Aorta (tissue), 5 donors: ENCODE measurements at regions of chr10 and their contacts with region 1.

Region 1: GRCh38 chr10:100346765-100347567 is at the start of gene SCD:
- DNase-seq: peak; percentile 91
- ATAC-seq: peak; percentile 86
- H3K4me3 ChIP-seq: peak within 1 kb of the TSS; percentile 50 to 61
- H3K27ac ChIP-seq: no peak within 1 kb of the TSS
- H3K4me1 ChIP-seq: no peaks in the 10 kb centered on the region
- H3K27me3 ChIP-seq: no peaks in the 10 kb centered on the region
- total RNA-seq, gene SCD: 22.7 to 47.3 TPM

Region 2: DNA sequence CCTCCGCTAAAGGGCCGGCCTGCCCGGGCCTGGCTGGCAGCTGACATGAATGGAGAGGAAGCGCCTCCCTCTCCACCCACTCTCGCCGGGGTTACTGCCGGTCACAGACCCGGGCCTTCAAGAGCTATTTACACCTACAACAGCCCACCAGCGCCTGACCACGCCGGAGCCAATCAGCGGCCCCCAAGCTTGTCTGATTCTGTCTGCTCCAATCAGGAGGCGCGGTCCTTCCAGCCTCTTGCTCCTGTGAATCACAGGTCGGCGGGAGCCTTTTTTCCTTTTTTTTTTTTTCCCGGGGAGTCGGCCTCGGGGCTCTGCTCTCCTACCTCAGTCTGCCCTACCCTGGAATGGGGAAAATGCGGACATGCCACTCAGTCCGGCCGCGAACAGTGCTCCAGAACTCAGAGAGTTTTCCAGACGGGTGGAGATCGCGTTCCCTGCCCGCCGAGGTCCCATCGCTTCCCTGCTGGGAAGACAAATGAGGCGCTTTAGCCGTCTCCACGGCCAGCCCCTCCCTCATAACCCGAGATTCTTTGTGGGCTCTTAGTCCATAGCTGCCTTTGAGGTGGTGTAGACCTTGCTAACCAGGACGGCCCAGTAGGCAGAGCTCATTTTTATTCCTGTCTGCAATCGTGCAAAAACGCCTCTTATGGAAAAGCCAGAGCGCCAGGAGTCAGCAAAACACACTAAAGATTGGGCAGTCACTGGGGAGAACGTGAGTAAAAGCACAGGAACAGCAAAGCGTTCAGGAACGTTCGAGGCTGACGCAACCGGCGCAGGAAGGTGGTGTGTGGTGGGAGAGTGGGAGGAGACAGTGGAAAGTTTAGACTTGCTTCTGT is 26.6 kb after region 1 on chr10:
- intact Hi-C with region 1: loop called (anchors 1 to 2 kb)
- DNase-seq: peak; percentile 99
- ATAC-seq: peak; percentile 95
- H3K4me3 ChIP-seq: peak overlapping the region; percentile 23 to 56
- H3K27ac ChIP-seq: peak overlapping the region; percentile 95 to 98
- H3K4me1 ChIP-seq: peaks cover 0 to 10% of the 10 kb centered on the region in 2 donors
- H3K27me3 ChIP-seq: no peaks in the 10 kb centered on the region